ENCODE measurements at regions of chr3 and their contacts with region 1.

Region 1: DNA sequence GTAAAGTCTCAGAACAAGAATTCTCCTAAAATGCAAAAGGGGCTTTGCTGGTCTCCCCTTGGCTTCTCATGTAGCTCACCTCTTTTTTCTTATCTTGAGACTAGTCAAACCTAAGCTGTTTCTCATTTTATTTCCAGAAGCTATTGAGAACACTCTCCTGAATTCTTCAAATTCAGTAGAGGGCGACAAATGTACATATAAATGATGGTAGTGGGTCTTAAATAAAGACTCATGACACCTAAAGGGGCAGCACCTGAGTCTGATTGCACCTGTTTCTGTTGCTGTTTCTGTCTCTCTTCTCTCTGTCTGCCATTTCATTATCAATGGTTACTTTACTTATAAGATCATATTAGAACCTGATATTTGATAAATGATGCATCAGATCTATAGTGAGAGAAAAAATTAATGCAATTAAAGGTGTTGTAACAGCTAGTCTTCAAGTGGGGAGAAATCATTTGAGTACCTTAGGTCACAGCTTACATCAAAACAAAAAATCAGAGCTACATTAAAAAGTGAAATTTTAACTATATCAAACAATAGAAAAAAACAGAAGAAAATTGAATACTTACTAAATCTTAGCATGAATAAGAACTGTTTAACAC is 7.0 kb downstream of the ADIPOQ start:
- DNase-seq: peak; percentile 81
- ATAC-seq: peak; percentile 88
- H3K4me3 ChIP-seq: no peak overlapping the region
- H3K4me3 Mint-ChIP-seq: no peak overlapping the region
- H3K27ac ChIP-seq: no peak overlapping the region
- H3K27ac Mint-ChIP-seq: no peak overlapping the region
- H3K4me1 ChIP-seq: peaks cover 9 to 11% of the 10 kb centered on the region in 2 donors
- H3K4me1 Mint-ChIP-seq: peaks cover 13% of the 10 kb centered on the region
- H3K27me3 ChIP-seq: no peaks in the 10 kb centered on the region
- H3K27me3 Mint-ChIP-seq: peaks cover 16% of the 10 kb centered on the region
- CTCF ChIP-seq: peak; percentile 70

Region 2: GRCh38 chr3:186570096-186570940 is 279.2 kb before region 1 on chr3 and contains the start of gene DNAJB11:
- CTCF ChIA-PET with region 1: no interaction called
- POLR2A ChIA-PET with region 1: no interaction called
- intact Hi-C with region 1: no loop called
- DNase-seq: peak; percentile 99
- ATAC-seq: peak; percentile 85
- H3K4me3 ChIP-seq: peak within 1 kb of the TSS; percentile 86 to 98 (median 90)
- H3K4me3 Mint-ChIP-seq: peak within 1 kb of the TSS; percentile 98
- H3K27ac ChIP-seq: peak within 1 kb of the TSS; percentile 91 to 96
- H3K27ac Mint-ChIP-seq: peak within 1 kb of the TSS; percentile 98
- H3K4me1 ChIP-seq: peaks cover 28 to 40% of the 10 kb centered on the region in 2 donors
- H3K4me1 Mint-ChIP-seq: peaks cover 51% of the 10 kb centered on the region
- H3K27me3 ChIP-seq: no peaks in the 10 kb centered on the region
- H3K27me3 Mint-ChIP-seq: no peaks in the 10 kb centered on the region
- CTCF ChIP-seq: no peak
- total RNA-seq, gene DNAJB11: 27.7 and 28.5 TPM in 2 replicates

Region 3: DNA sequence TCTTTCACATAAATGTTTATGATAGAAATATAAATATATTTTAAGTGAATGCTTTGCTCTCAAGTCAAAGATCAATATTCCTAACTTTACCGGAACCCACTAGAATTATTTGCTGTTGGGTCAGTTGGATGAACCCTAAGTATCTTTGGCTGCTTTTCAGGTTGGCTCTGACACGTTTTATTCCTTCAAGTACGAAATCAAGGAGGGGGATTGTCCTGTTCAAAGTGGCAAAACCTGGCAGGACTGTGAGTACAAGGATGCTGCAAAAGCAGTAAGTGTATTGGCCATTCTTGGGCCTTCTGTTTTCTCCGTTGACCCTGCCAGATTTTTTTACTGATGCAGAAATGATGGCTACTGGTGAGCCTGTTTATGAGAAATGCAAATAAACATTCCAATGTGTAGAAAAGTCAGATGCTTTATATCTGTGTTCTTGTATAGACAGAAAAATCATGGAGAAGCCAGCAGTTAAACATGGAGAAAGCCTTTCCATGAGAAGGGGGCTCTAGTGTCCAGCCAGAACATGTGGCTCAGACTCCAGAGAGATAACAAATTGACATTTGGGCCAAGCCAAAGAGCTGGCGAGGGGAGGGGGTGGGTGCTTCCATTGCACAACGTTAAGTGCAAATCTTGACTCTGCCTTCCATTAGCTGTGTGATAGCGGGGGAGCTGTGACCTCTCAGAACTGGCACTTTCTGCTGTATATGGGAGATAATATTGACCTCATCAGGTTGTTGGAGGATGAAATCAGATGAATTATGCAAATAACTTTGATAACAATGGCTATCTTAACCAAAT is 129.3 kb before region 1 on chr3:
- CTCF ChIA-PET with region 1: no interaction called
- POLR2A ChIA-PET with region 1: no interaction called
- intact Hi-C with region 1: no loop called
- DNase-seq: no peak
- ATAC-seq: no peak
- H3K4me3 ChIP-seq: no peak overlapping the region
- H3K4me3 Mint-ChIP-seq: no peak overlapping the region
- H3K27ac ChIP-seq: no peak overlapping the region
- H3K27ac Mint-ChIP-seq: no peak overlapping the region
- H3K4me1 ChIP-seq: no peaks in the 10 kb centered on the region
- H3K4me1 Mint-ChIP-seq: no peaks in the 10 kb centered on the region
- H3K27me3 ChIP-seq: peaks cover 0 to 4% (median 0%) of the 10 kb centered on the region in 4 experiments
- H3K27me3 Mint-ChIP-seq: peaks cover 13% of the 10 kb centered on the region
- CTCF ChIP-seq: no peak

Region 4: GRCh38 chr3:186732169-186732766 is 117.2 kb before region 1 on chr3:
- CTCF ChIA-PET with region 1: no interaction called
- POLR2A ChIA-PET with region 1: no interaction called
- intact Hi-C with region 1: no loop called
- DNase-seq: no peak
- ATAC-seq: no peak
- H3K4me3 ChIP-seq: no peak overlapping the region
- H3K4me3 Mint-ChIP-seq: no peak overlapping the region
- H3K27ac ChIP-seq: no peak overlapping the region
- H3K27ac Mint-ChIP-seq: no peak overlapping the region
- H3K4me1 ChIP-seq: no peaks in the 10 kb centered on the region
- H3K4me1 Mint-ChIP-seq: no peaks in the 10 kb centered on the region
- H3K27me3 ChIP-seq: no peaks in the 10 kb centered on the region
- H3K27me3 Mint-ChIP-seq: peaks cover 7% of the 10 kb centered on the region
- CTCF ChIP-seq: no peak

Region 5: GRCh38 chr3:186930641-186931531 is 81.4 kb after region 1 on chr3:
- CTCF ChIA-PET with region 1: interaction called, 109 read pairs
- POLR2A ChIA-PET with region 1: interaction called, 12 read pairs
- intact Hi-C with region 1: loop called (anchors 1 kb)
- DNase-seq: peak; percentile 89
- ATAC-seq: peak; percentile 84
- H3K4me3 ChIP-seq: peak overlapping the region; percentile 84 to 94 (median 91)
- H3K4me3 Mint-ChIP-seq: peak overlapping the region; percentile 100
- H3K27ac ChIP-seq: peak overlapping the region; percentile 79 to 83
- H3K27ac Mint-ChIP-seq: peak overlapping the region; percentile 98
- H3K4me1 ChIP-seq: peaks cover 26 to 40% of the 10 kb centered on the region in 2 donors
- H3K4me1 Mint-ChIP-seq: peaks cover 58% of the 10 kb centered on the region
- H3K27me3 ChIP-seq: no peaks in the 10 kb centered on the region
- H3K27me3 Mint-ChIP-seq: no peaks in the 10 kb centered on the region
- CTCF ChIP-seq: peak; percentile 47

Region 6: DNA sequence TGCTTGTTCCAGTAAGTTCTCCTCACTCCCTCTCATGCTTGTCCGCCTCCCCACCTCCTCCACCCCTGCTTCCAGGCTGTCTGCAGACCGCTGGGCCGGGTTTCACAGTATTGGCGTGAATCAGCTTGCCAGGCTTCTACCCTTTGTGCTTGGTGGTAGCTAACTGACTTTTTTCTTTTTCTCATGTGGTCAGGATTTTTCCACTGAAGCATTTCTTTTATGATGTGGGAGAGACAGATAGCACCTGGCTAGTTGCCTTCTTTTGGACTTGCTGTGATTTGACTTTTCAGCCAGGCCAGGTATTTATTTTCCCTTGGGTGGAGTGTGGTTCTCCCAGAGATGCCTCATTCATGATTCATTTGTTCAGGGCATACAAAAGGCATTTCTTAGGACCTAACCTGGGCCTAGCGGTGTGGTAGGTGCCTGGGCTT is 141.4 kb after region 1 on chr3:
- CTCF ChIA-PET with region 1: interaction called, 11 read pairs
- POLR2A ChIA-PET with region 1: no interaction called
- intact Hi-C with region 1: no loop called
- DNase-seq: no peak
- ATAC-seq: no peak
- H3K4me3 ChIP-seq: no peak overlapping the region
- H3K4me3 Mint-ChIP-seq: peak overlapping the region; percentile 26
- H3K27ac ChIP-seq: peak overlapping the region; percentile 40 to 86
- H3K27ac Mint-ChIP-seq: peak overlapping the region; percentile 92
- H3K4me1 ChIP-seq: peaks cover 76 to 97% of the 10 kb centered on the region in 2 donors
- H3K4me1 Mint-ChIP-seq: peaks cover 89% of the 10 kb centered on the region
- H3K27me3 ChIP-seq: no peaks in the 10 kb centered on the region
- H3K27me3 Mint-ChIP-seq: no peaks in the 10 kb centered on the region
- CTCF ChIP-seq: no peak

Region 7: DNA sequence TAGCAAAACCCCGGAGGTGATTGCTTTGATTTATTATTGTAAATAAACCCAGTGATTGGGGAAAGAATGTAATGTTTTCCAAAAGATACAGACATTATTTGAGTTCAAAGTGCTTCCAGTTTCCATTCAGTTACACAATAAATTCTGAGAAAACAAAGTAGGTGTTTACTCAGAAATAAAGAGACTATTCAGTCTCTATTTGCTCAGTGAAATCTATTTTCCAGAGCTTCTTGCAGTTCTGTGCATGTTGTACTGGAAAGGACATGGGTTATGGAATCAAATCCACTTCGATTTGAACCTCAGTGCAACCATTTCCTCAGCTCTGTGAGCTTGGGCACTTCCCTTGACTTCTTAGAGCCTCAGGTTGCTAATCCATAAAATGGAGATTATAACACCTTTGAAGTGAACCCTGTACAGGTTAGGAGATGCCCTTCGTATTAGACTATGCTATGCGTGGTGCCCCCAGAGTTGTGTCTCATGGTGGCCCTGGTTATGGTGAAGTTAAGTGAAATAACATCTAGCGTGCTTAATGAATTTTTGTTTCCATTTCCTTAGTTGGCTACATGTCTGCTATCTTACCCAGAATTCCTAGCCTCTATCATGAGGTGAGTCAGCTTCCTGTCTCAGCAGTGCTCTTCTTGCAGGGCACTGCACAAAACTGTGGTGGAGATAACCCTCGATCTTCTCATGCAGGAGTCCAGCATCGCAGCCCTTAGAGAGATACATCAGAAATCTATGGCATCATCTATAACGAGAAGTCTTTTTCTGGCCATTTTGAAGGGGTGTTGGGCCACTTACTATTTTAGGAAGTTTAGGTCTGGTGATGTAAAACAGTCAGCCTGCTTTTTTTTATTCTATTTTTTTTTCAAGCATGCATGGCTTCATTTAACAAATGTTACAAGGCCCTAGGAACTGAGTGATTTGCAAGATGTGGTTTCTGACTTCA is 192.2 kb after region 1 on chr3:
- CTCF ChIA-PET with region 1: interaction called, 10 read pairs
- POLR2A ChIA-PET with region 1: no interaction called
- intact Hi-C with region 1: no loop called
- DNase-seq: peak; percentile 70
- ATAC-seq: peak; percentile 79
- H3K4me3 ChIP-seq: peak overlapping the region in 1 of 5 experiments; percentile 31
- H3K4me3 Mint-ChIP-seq: peak overlapping the region; percentile 75
- H3K27ac ChIP-seq: peak overlapping the region; percentile 89 to 92
- H3K27ac Mint-ChIP-seq: peak overlapping the region; percentile 90
- H3K4me1 ChIP-seq: peaks cover 83 to 84% of the 10 kb centered on the region in 2 donors
- H3K4me1 Mint-ChIP-seq: peaks cover 84% of the 10 kb centered on the region
- H3K27me3 ChIP-seq: no peaks in the 10 kb centered on the region
- H3K27me3 Mint-ChIP-seq: no peaks in the 10 kb centered on the region
- CTCF ChIP-seq: no peak

Region 8: GRCh38 chr3:187139126-187139894 is 289.8 kb after region 1 on chr3 and contains the start of gene RPL39L:
- CTCF ChIA-PET with region 1: interaction called, 17 read pairs
- POLR2A ChIA-PET with region 1: no interaction called
- intact Hi-C with region 1: no loop called
- DNase-seq: peak; percentile 95
- ATAC-seq: peak; percentile 95
- H3K4me3 ChIP-seq: peak within 1 kb of the TSS in 4 of 5 experiments; percentile 49 to 68 (median 58)
- H3K4me3 Mint-ChIP-seq: peak within 1 kb of the TSS; percentile 90
- H3K27ac ChIP-seq: peak within 1 kb of the TSS; percentile 77 to 79
- H3K27ac Mint-ChIP-seq: peak within 1 kb of the TSS; percentile 90
- H3K4me1 ChIP-seq: peaks cover 12 to 14% of the 10 kb centered on the region in 2 donors
- H3K4me1 Mint-ChIP-seq: peaks cover 16% of the 10 kb centered on the region
- H3K27me3 ChIP-seq: no peaks in the 10 kb centered on the region
- H3K27me3 Mint-ChIP-seq: no peaks in the 10 kb centered on the region
- CTCF ChIP-seq: peak; percentile 79
- total RNA-seq, gene RPL39L: 2.0 and 3.1 TPM in 2 replicates

Measured in B cell (primary cell).